Upper lobe of right lung (tissue), 1 donor: ENCODE measurements at regions of chr15 and their contacts with region 1.

Region 1: DNA sequence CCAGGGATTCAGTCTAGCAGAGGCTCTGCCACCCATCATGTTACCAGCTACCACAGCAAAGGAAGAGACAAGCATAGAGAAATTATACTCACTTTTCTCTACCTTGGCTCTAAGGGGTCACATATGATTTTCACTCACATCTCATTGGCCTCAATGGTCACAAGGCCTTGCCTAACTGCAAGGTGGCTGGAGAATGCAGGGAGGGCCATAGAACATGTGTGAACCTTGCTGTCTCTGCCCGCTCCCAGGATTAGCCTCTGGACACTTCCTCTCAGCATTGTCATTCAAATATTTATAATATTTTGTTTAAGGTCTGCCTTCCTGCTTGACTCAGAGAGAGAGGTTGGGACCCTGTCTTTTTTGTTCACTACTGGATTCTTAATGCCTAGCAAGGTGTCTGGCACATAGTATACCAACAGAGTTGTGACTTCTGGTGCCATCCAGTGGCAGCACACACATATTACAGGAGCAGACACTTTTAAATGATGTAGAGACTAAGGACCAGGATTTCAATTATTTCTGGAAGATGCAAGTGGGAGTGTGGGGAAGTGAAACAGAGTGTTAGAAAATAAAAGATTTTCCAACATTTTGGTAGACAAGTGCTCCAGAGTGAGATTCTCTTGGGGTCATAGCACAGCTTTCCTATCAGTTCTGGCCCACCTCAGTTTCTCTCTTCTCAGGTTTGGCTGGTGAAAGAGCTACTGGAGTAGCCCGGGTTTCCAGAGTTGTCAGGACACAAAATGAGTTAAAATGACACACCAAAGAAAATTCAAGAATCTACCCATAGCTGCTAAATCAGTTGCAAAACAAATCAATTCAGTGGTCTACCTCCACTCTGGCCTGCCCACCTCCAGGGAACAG is 119.0 kb upstream of the RASGRP1 start:
- DNase-seq: no peak
- ATAC-seq: peak; percentile 94
- H3K4me3 ChIP-seq: no peak overlapping the region
- H3K27ac ChIP-seq: no peak overlapping the region
- H3K4me1 ChIP-seq: no peaks in the 10 kb centered on the region
- H3K27me3 ChIP-seq: no peaks in the 10 kb centered on the region
- CTCF ChIP-seq: peak; percentile 78

Region 2: GRCh38 chr15:38440353-38441129 is 243.1 kb before region 1 on chr15:
- intact Hi-C with region 1: loop called (anchors 10 kb)
- DNase-seq: no peak
- ATAC-seq: peak; percentile 96
- H3K4me3 ChIP-seq: no peak overlapping the region
- H3K27ac ChIP-seq: no peak overlapping the region
- H3K4me1 ChIP-seq: no peaks in the 10 kb centered on the region
- H3K27me3 ChIP-seq: no peaks in the 10 kb centered on the region
- CTCF ChIP-seq: peak; percentile 97

Region 3: GRCh38 chr15:38474155-38474757 is 209.4 kb before region 1 on chr15:
- intact Hi-C with region 1: no loop called
- DNase-seq: no peak
- ATAC-seq: peak; percentile 98
- H3K4me3 ChIP-seq: no peak overlapping the region
- H3K27ac ChIP-seq: no peak overlapping the region
- H3K4me1 ChIP-seq: no peaks in the 10 kb centered on the region
- H3K27me3 ChIP-seq: no peaks in the 10 kb centered on the region
- CTCF ChIP-seq: peak; percentile 68

Region 4: GRCh38 chr15:38563723-38564519 is 119.7 kb before region 1 on chr15:
- intact Hi-C with region 1: loop called (anchors 10 kb)
- DNase-seq: peak; percentile 91
- ATAC-seq: peak; percentile 95
- H3K4me3 ChIP-seq: peak overlapping the region; percentile 59
- H3K27ac ChIP-seq: peak overlapping the region; percentile 60
- H3K4me1 ChIP-seq: peaks cover 5% of the 10 kb centered on the region
- H3K27me3 ChIP-seq: peaks cover 7% of the 10 kb centered on the region
- CTCF ChIP-seq: peak; percentile 90